ENCODE measurements at regions of chr4 and their contacts with region 1.

Region 1: DNA sequence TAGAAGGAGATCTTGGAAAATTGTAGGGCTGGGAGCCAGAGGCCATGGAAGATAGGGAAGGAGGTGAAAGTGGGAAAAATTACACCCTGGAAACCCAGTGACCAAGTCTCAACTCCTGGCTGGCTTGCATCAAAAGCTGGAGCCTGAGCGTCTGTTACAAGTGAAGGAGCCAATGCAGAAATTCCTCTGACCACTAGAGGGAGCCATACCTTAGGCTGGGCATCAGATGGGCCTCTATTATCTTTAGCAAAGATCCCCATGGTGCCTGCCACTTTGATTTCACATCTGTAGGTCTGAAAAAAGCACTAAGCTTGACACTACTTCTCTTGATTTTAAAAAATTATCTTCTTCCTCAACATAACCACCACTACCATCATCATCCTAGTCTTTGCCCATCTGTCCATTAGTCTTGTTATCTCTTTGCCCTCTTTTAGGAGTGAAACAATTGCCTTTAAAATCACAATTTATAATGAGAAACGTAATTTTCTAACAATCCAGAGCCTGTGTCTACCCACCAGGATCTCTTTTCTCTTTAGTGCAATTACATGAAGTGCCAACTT is 62.9 kb downstream of the ANAPC4 start:
- DNase-seq: peak; percentile 61 to 62
- H3K4me3 ChIP-seq: no peak overlapping the region
- H3K27ac ChIP-seq: no peak overlapping the region
- H3K4me1 ChIP-seq: no peaks in the 10 kb centered on the region
- H3K27me3 ChIP-seq: no peaks in the 10 kb centered on the region
- CTCF ChIP-seq: peak; percentile 49 to 63

Region 2: DNA sequence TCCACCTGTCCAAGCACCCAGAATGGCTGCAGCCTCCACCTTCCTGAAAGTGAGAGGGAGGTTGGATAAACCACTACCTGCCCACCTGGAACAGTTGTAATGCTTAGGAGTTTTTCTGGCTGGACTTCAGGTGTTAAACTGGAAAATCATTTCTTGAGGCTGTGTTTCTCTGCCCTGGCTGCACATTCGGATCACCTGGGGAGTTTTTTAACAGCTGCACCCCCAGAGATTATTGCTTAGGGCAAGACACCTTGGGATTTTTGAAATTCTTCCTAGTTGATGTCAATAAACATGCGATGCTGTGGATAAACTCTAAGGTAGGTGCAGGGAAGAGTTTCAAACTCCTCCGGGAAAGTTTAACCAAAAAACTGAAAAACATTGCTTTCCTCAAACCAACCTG is 237.6 kb before region 1 on chr4:
- intact Hi-C with region 1: no loop called
- DNase-seq: no peak
- H3K4me3 ChIP-seq: no peak overlapping the region
- H3K27ac ChIP-seq: no peak overlapping the region
- H3K4me1 ChIP-seq: no peaks in the 10 kb centered on the region
- H3K27me3 ChIP-seq: no peaks in the 10 kb centered on the region
- CTCF ChIP-seq: no peak

Region 3: DNA sequence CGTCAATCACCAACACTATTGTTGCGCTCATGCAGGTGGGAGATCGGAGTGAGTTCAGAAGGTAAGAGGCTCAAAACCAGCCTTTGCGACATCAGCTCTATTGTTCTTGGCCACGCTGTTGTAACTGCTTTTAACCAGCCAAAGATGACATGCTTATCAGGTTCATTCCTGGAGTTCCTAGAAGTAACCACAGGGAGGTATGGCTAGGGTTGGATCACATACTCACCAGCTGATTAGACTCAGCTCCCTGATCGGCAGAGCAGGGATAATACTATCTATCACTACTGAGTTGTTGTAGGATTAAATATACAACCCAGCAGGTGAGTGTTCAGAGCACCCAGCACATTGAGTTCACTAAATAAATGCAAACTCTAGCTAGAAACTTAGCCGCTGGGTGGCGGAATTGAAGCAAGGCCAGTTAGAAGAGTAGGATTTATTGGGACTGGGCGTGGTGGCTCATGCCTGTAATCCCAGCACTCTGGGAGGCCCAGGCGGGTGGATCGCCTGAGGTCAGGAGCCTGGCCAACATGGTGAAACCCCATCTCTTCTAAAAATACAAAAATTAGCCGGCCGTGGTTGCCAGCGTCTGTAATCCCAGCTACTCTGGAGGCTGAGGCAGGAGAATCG is 228.0 kb after region 1 on chr4:
- intact Hi-C with region 1: no loop called
- DNase-seq: peak in 1 of 2 donors; percentile 12
- H3K4me3 ChIP-seq: no peak overlapping the region
- H3K27ac ChIP-seq: no peak overlapping the region
- H3K4me1 ChIP-seq: no peaks in the 10 kb centered on the region
- H3K27me3 ChIP-seq: peaks cover 0 to 4% of the 10 kb centered on the region in 2 donors
- CTCF ChIP-seq: no peak

Region 4: GRCh38 chr4:25767877-25768725 is 328.1 kb after region 1 on chr4:
- intact Hi-C with region 1: loop called (anchors 10 kb)
- DNase-seq: peak in 1 of 2 donors; percentile 31
- H3K4me3 ChIP-seq: no peak overlapping the region
- H3K27ac ChIP-seq: no peak overlapping the region
- H3K4me1 ChIP-seq: no peaks in the 10 kb centered on the region
- H3K27me3 ChIP-seq: no peaks in the 10 kb centered on the region
- CTCF ChIP-seq: peak in 1 of 2 experiments; percentile 48